Dorsolateral prefrontal cortex (tissue), 120 donors: ENCODE measurements at regions of chr10 and their contacts with region 1.

Region 1: GRCh38 chr10:32378363-32379317 is 31.7 kb upstream of the EPC1 start:
- DNase-seq: peak; percentile 95 to 99 (median 98)
- H3K4me3 ChIP-seq: peak overlapping the region; percentile 50 to 94 (median 77)
- H3K27ac ChIP-seq: peak overlapping the region; percentile 6 to 98 (median 91)
- H3K27me3 ChIP-seq: no peaks in the 10 kb centered on the region
- CTCF ChIP-seq: peak in 37 of 56 donors; percentile 5 to 55 (median 23)

Region 2: DNA sequence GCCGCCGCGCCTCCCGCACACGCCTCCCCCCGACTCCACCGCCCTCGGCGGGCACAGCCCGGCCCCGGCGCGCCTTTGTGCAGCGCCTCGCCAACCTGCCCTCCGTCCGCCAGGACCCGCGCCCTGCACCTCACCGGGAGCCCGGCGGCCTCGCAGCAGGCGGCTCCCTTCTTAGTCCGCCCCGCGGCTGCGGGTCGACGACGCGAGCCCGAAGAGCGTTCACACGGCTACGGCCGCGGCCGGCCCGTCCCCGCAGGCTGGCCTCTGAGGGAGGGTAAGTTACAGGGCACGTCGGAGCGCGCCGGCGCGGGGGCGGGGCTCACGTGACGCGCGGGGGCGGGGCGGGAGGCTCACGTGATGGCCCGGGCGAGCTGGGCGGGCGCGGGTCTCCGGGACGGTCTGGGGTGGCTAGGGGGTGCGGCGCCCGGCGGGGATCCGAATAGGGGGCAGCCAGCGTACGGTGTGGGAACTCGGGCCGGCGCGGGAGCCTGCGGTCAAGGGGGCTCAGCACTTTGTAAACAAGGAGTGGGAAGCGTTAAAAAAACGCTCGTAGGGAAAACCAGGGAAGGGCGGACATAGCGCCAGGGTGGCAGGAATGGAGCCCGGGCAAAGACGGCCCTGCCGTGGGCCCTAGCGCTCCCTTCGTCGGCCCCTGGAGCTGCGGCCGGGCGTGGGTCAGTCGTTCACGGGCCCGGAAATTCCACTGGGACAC is 449.9 kb before region 1 on chr10 and contains the start of gene ARHGAP12:
- intact Hi-C with region 1: loop called in 1 of 2 experiments (anchors 5 kb)
- DNase-seq: peak; percentile 71 to 91 (median 80)
- H3K4me3 ChIP-seq: peak within 1 kb of the TSS; percentile 55 to 96 (median 86)
- H3K27ac ChIP-seq: peak within 1 kb of the TSS; percentile 66 to 98 (median 92)
- H3K27me3 ChIP-seq: no peaks in the 10 kb centered on the region
- CTCF ChIP-seq: peak in 10 of 56 donors; percentile 2 to 46 (median 11)
- total RNA-seq, gene ARHGAP12: 27.1 to 48.7 (median 38.6) TPM

Region 3: DNA sequence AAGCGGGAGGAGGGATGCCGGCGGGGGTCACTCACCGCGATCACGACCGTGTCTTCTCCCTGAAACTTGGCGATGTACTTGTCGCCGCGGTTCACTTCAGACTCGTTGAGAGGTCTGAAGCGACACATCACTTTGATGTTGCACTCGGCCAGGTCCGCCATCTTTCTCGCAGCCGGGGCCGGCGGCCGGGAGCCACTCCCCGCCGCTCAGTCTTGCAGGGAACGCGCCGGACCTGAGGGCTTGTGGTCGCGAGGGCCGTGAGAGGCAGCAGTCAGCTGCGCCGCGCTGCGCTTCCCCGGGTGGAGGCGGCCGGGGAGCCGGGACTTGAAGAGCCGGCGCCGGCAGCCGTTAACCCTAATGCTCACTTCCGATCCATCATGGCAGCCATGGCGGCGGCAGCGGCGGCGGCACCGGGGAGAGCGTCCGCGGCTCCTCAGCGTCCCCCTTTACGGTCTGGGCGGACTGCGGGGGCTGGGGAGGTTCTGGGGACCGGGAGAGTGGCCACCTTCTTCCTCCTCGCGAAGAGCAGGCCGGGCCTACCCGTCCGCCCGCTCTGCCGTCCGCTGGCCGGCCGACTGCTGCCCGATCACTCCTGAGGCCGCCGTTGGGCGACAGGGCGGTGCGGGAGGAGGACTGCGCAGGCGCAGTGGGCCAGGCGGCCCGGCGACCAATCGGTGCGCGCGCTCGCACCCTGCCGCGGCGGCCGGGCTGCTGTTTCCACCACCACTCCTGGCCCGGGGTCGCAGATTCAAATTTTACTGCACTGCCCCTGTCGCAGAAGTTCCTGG is 322.6 kb before region 1 on chr10 and contains the start of gene KIF5B:
- intact Hi-C with region 1: loop called (anchors 10 kb)
- DNase-seq: peak; percentile 66 to 94 (median 84)
- H3K4me3 ChIP-seq: peak within 1 kb of the TSS; percentile 54 to 98 (median 89)
- H3K27ac ChIP-seq: peak within 1 kb of the TSS; percentile 81 to 100 (median 99)
- H3K27me3 ChIP-seq: no peaks in the 10 kb centered on the region
- CTCF ChIP-seq: peak in 26 of 56 donors; percentile 2 to 48 (median 22)
- total RNA-seq, gene KIF5B: 73.4 to 239 (median 109) TPM

Region 4: GRCh38 chr10:32367793-32368453 is 10.7 kb before region 1 on chr10:
- intact Hi-C with region 1: loop called in 1 of 2 experiments (anchors 1 kb)
- DNase-seq: peak in 9 of 10 donors; percentile 39 to 69 (median 60)
- H3K4me3 ChIP-seq: peak overlapping the region in 44 of 59 donors; percentile 2 to 52 (median 28)
- H3K27ac ChIP-seq: peak overlapping the region in 42 of 59 donors; percentile 1 to 80 (median 48)
- H3K27me3 ChIP-seq: no peaks in the 10 kb centered on the region
- CTCF ChIP-seq: peak; percentile 78 to 98 (median 88)

Region 5: GRCh38 chr10:32445740-32446535 is 67.3 kb after region 1 on chr10 and contains the start of gene CCDC7:
- intact Hi-C with region 1: loop called (anchors 1 to 2 kb)
- DNase-seq: peak; percentile 52 to 89 (median 74)
- H3K4me3 ChIP-seq: peak within 1 kb of the TSS; percentile 59 to 94 (median 84)
- H3K27ac ChIP-seq: peak within 1 kb of the TSS; percentile 66 to 99 (median 96)
- H3K27me3 ChIP-seq: no peaks in the 10 kb centered on the region
- CTCF ChIP-seq: peak; percentile 13 to 78 (median 59)
- total RNA-seq, gene CCDC7: 53.8 to 143 (median 87.0) TPM

Region 6: GRCh38 chr10:32471232-32471631 is 92.6 kb after region 1 on chr10:
- intact Hi-C with region 1: no loop called
- DNase-seq: no peak
- H3K4me3 ChIP-seq: no peak overlapping the region
- H3K27ac ChIP-seq: no peak overlapping the region
- H3K27me3 ChIP-seq: no peaks in the 10 kb centered on the region
- CTCF ChIP-seq: no peak

Region 7: GRCh38 chr10:32958085-32959005 is 579.7 kb after region 1 on chr10 and contains the start of gene ITGB1:
- intact Hi-C with region 1: loop called (anchors 5 to 10 kb)
- DNase-seq: peak; percentile 85 to 97 (median 92)
- H3K4me3 ChIP-seq: peak within 1 kb of the TSS; percentile 71 to 98 (median 92)
- H3K27ac ChIP-seq: peak within 1 kb of the TSS; percentile 16 to 98 (median 91)
- H3K27me3 ChIP-seq: no peaks in the 10 kb centered on the region
- CTCF ChIP-seq: peak in 17 of 56 donors; percentile 6 to 43 (median 22)
- total RNA-seq, gene ITGB1: 45.5 to 146 (median 82.5) TPM